CD8-positive, alpha-beta T cell (primary cell): ENCODE measurements at regions of chr2 and their contacts with region 1.

Region 1: GRCh38 chr2:28821295-28821958 is 10.8 kb downstream of the SPDYA start:
- DNase-seq: peak in 8 of 9 experiments; percentile 20 to 82 (median 62)
- ATAC-seq: peak; percentile 92
- H3K4me3 ChIP-seq: no peak overlapping the region
- H3K4me3 Mint-ChIP-seq: no peak overlapping the region
- H3K27ac ChIP-seq: no peak overlapping the region
- H3K27ac Mint-ChIP-seq: no peak overlapping the region
- H3K4me1 ChIP-seq: peaks cover 5% of the 10 kb centered on the region
- H3K4me1 Mint-ChIP-seq: peaks cover 4% of the 10 kb centered on the region
- H3K27me3 ChIP-seq: no peaks in the 10 kb centered on the region
- H3K27me3 Mint-ChIP-seq: no peaks in the 10 kb centered on the region
- CTCF ChIP-seq: peak; percentile 79

Region 2: GRCh38 chr2:27683390-27684071 is 1137.9 kb before region 1 on chr2:
- CTCF ChIA-PET with region 1: no interaction called
- POLR2A ChIA-PET with region 1: no interaction called
- intact Hi-C with region 1: no loop called
- DNase-seq: peak; percentile 69 to 94 (median 85)
- ATAC-seq: peak; percentile 92
- H3K4me3 ChIP-seq: no peak overlapping the region
- H3K4me3 Mint-ChIP-seq: peak overlapping the region; percentile 35
- H3K27ac ChIP-seq: peak overlapping the region in 1 of 2 experiments; percentile 58
- H3K27ac Mint-ChIP-seq: peak overlapping the region; percentile 66
- H3K4me1 ChIP-seq: peaks cover 3% of the 10 kb centered on the region
- H3K4me1 Mint-ChIP-seq: peaks cover 23% of the 10 kb centered on the region
- H3K27me3 ChIP-seq: no peaks in the 10 kb centered on the region
- H3K27me3 Mint-ChIP-seq: no peaks in the 10 kb centered on the region
- CTCF ChIP-seq: peak; percentile 100

Region 3: DNA sequence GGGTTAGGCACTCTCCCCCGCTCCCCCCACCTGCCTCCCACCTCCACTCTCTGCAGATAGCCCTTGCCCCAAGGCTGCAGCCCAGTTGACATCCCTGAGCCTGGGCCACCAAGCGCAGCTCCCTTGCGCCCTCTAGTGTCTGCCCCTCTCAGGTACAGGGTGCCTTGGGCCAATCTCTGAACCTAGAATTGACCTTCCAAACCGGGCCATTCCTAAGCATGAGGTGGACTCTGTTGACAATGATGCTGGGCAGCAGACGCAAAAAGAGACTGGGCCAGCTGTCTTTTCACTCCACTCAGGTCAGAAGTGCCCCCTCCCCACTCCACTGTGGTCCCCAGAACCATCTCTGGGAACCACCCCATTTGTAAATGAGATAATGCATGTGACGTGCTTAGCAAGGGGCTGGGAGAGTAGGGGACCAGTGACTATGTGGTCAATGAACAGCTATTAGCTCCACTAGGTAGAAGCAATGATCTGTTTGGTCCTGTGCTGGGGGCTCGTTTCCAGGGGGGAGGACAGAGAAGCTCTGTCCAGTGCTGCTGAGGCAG is 368.8 kb before region 1 on chr2:
- CTCF ChIA-PET with region 1: no interaction called
- POLR2A ChIA-PET with region 1: no interaction called
- intact Hi-C with region 1: no loop called
- DNase-seq: peak; percentile 60 to 89 (median 80)
- ATAC-seq: peak; percentile 91
- H3K4me3 ChIP-seq: no peak overlapping the region
- H3K4me3 Mint-ChIP-seq: no peak overlapping the region
- H3K27ac ChIP-seq: no peak overlapping the region
- H3K27ac Mint-ChIP-seq: no peak overlapping the region
- H3K4me1 ChIP-seq: no peaks in the 10 kb centered on the region
- H3K4me1 Mint-ChIP-seq: peaks cover 2% of the 10 kb centered on the region
- H3K27me3 ChIP-seq: no peaks in the 10 kb centered on the region
- H3K27me3 Mint-ChIP-seq: no peaks in the 10 kb centered on the region
- CTCF ChIP-seq: peak; percentile 80

Region 4: DNA sequence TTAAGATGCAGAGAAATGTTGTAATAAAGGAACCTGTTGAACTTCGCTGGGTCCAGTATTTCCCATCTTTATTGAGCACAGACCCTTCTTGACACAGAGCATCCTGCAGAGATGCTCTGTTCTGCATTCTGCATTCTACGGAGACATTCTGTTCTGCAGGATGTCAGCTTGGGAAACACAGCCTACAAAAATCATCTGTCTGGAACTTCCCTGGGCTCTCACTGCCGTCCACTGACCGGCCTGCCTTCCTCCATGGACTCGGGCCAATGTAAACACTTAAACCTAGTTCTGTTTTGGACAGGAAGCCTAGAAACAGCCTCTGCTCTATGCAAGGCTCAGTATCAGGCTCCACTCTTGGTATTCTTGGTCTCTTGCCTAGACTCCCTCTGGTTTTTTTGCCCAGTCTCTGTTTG is 159.8 kb before region 1 on chr2:
- CTCF ChIA-PET with region 1: no interaction called
- POLR2A ChIA-PET with region 1: no interaction called
- intact Hi-C with region 1: no loop called
- DNase-seq: no peak
- ATAC-seq: no peak
- H3K4me3 ChIP-seq: no peak overlapping the region
- H3K4me3 Mint-ChIP-seq: no peak overlapping the region
- H3K27ac ChIP-seq: no peak overlapping the region
- H3K27ac Mint-ChIP-seq: no peak overlapping the region
- H3K4me1 ChIP-seq: peaks cover 11% of the 10 kb centered on the region
- H3K4me1 Mint-ChIP-seq: peaks cover 14% of the 10 kb centered on the region
- H3K27me3 ChIP-seq: no peaks in the 10 kb centered on the region
- H3K27me3 Mint-ChIP-seq: no peaks in the 10 kb centered on the region
- CTCF ChIP-seq: no peak

Region 5: DNA sequence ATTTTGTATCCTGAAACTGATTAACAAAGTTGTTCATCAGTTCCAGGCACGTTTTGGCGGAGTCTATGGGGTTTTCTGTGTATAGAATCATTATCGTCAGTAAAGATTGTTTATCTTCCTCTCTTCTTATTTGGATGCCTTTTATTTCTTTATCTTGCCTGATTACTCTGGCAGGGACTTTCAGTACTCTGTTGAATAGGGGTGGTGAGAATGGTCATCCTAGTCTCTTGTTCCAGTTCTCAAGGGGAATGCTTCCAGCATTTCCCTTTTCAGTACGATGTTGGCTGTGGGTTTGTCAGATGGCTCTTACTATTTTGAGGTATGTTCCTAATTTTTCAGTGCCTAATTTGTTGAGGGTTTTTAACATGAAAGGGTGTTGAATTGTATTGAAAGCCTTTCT is 24.8 kb before region 1 on chr2:
- CTCF ChIA-PET with region 1: no interaction called
- POLR2A ChIA-PET with region 1: no interaction called
- intact Hi-C with region 1: no loop called
- DNase-seq: no peak
- ATAC-seq: no peak
- H3K4me3 ChIP-seq: no peak overlapping the region
- H3K4me3 Mint-ChIP-seq: no peak overlapping the region
- H3K27ac ChIP-seq: no peak overlapping the region
- H3K27ac Mint-ChIP-seq: no peak overlapping the region
- H3K4me1 ChIP-seq: no peaks in the 10 kb centered on the region
- H3K4me1 Mint-ChIP-seq: peaks cover 31% of the 10 kb centered on the region
- H3K27me3 ChIP-seq: no peaks in the 10 kb centered on the region
- H3K27me3 Mint-ChIP-seq: no peaks in the 10 kb centered on the region
- CTCF ChIP-seq: no peak

Region 6: DNA sequence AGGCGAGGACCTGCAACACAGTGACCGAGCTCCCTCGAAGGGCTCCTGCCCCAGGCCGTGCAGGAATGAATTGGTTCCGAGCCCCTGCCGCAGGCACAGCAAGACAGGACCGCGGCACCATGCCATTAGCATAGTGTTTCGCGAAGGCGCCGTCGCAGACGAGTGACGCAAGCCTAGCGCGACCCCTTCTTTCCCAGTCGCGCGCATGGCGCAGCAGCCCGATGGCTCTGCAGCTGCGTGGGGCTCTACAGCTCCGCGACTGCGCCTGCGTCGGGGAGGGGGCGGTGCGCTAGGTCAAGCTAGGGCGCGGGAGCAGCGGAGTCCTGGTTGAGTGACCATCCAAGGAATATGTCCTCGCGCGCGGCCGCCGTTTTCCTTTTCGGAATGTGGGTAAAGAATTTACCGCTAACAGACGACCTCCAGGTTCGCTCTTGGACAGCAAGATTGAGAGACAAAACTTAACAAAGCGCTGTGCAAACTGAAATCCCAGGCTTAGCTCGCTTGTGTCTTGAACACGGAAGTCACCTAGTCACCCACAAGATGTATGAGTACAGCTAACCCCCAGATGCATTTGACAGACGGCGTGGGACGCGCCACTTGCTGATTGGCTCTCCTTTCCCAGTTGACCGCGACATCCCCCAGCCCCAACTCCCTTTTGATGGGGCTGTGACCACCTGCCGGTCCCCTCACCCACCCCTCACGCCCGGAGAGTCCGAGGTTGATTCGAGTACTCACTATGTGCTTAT is 48.9 kb after region 1 on chr2 and contains the start of gene TRMT61B:
- CTCF ChIA-PET with region 1: interaction called, 3 read pairs
- POLR2A ChIA-PET with region 1: no interaction called
- intact Hi-C with region 1: loop called in 1 of 2 experiments (anchors 5 kb)
- DNase-seq: peak; percentile 89 to 99 (median 97)
- ATAC-seq: peak; percentile 96
- H3K4me3 ChIP-seq: peak within 1 kb of the TSS; percentile 89 to 98
- H3K4me3 Mint-ChIP-seq: peak within 1 kb of the TSS; percentile 94
- H3K27ac ChIP-seq: peak within 1 kb of the TSS; percentile 94 to 95
- H3K27ac Mint-ChIP-seq: peak within 1 kb of the TSS; percentile 99
- H3K4me1 ChIP-seq: peaks cover 28% of the 10 kb centered on the region
- H3K4me1 Mint-ChIP-seq: peaks cover 33% of the 10 kb centered on the region
- H3K27me3 ChIP-seq: no peaks in the 10 kb centered on the region
- H3K27me3 Mint-ChIP-seq: no peaks in the 10 kb centered on the region
- CTCF ChIP-seq: no peak
- total RNA-seq, gene TRMT61B: 17.9 to 22.9 TPM

Region 7: DNA sequence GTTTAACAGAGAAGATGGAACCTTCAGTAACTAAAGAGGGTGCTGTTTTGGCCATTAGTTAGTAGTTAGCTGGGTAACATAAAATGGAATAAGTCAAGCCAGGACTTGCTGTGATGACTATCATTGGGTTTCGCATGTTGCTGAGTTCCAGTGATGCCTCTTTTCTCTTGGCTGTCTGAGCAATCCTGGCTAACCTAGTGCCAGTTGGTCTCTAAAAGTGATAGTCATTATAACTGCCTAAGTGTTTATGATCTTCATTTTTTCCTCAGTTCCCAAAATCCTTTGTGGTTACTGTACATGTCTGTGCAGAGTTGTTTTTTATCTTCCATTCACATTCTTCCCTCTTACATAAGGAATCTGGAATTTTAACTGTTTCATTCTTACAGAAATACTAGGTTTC is 106.5 kb after region 1 on chr2:
- CTCF ChIA-PET with region 1: no interaction called
- POLR2A ChIA-PET with region 1: no interaction called
- intact Hi-C with region 1: loop called in 1 of 2 experiments (anchors 5 kb)
- DNase-seq: no peak
- ATAC-seq: no peak
- H3K4me3 ChIP-seq: no peak overlapping the region
- H3K4me3 Mint-ChIP-seq: no peak overlapping the region
- H3K27ac ChIP-seq: no peak overlapping the region
- H3K27ac Mint-ChIP-seq: no peak overlapping the region
- H3K4me1 ChIP-seq: no peaks in the 10 kb centered on the region
- H3K4me1 Mint-ChIP-seq: no peaks in the 10 kb centered on the region
- H3K27me3 ChIP-seq: no peaks in the 10 kb centered on the region
- H3K27me3 Mint-ChIP-seq: no peaks in the 10 kb centered on the region
- CTCF ChIP-seq: no peak

Region 8: GRCh38 chr2:29196792-29197788 is 375.7 kb after region 1 on chr2:
- CTCF ChIA-PET with region 1: interaction called, 4 read pairs
- POLR2A ChIA-PET with region 1: no interaction called
- intact Hi-C with region 1: loop called (anchors 1 kb)
- DNase-seq: peak; percentile 59 to 83 (median 79)
- ATAC-seq: peak; percentile 98
- H3K4me3 ChIP-seq: no peak overlapping the region
- H3K4me3 Mint-ChIP-seq: no peak overlapping the region
- H3K27ac ChIP-seq: no peak overlapping the region
- H3K27ac Mint-ChIP-seq: no peak overlapping the region
- H3K4me1 ChIP-seq: no peaks in the 10 kb centered on the region
- H3K4me1 Mint-ChIP-seq: peaks cover 7% of the 10 kb centered on the region
- H3K27me3 ChIP-seq: no peaks in the 10 kb centered on the region
- H3K27me3 Mint-ChIP-seq: no peaks in the 10 kb centered on the region
- CTCF ChIP-seq: peak; percentile 87

Region 9: GRCh38 chr2:29841386-29842004 is 1020.1 kb after region 1 on chr2:
- CTCF ChIA-PET with region 1: no interaction called
- POLR2A ChIA-PET with region 1: no interaction called
- intact Hi-C with region 1: loop called in 1 of 2 experiments (anchors 5 kb)
- DNase-seq: peak in 3 of 9 experiments; percentile 7 to 38 (median 32)
- ATAC-seq: no peak
- H3K4me3 ChIP-seq: no peak overlapping the region
- H3K4me3 Mint-ChIP-seq: no peak overlapping the region
- H3K27ac ChIP-seq: no peak overlapping the region
- H3K27ac Mint-ChIP-seq: no peak overlapping the region
- H3K4me1 ChIP-seq: no peaks in the 10 kb centered on the region
- H3K4me1 Mint-ChIP-seq: no peaks in the 10 kb centered on the region
- H3K27me3 ChIP-seq: no peaks in the 10 kb centered on the region
- H3K27me3 Mint-ChIP-seq: peaks cover 18% of the 10 kb centered on the region
- CTCF ChIP-seq: peak; percentile 70

Region 10: GRCh38 chr2:30072250-30072842 is 1250.9 kb after region 1 on chr2:
- CTCF ChIA-PET with region 1: interaction called, 5 read pairs
- POLR2A ChIA-PET with region 1: no interaction called
- intact Hi-C with region 1: loop called in 1 of 2 experiments (anchors 2 kb)
- DNase-seq: peak in 8 of 9 experiments; percentile 25 to 72 (median 53)
- ATAC-seq: peak; percentile 85
- H3K4me3 ChIP-seq: no peak overlapping the region
- H3K4me3 Mint-ChIP-seq: no peak overlapping the region
- H3K27ac ChIP-seq: no peak overlapping the region
- H3K27ac Mint-ChIP-seq: no peak overlapping the region
- H3K4me1 ChIP-seq: no peaks in the 10 kb centered on the region
- H3K4me1 Mint-ChIP-seq: no peaks in the 10 kb centered on the region
- H3K27me3 ChIP-seq: no peaks in the 10 kb centered on the region
- H3K27me3 Mint-ChIP-seq: peaks cover 53% of the 10 kb centered on the region
- CTCF ChIP-seq: peak; percentile 57